ENCODE measurements at regions of chr3 and their contacts with region 1.

Region 1: DNA sequence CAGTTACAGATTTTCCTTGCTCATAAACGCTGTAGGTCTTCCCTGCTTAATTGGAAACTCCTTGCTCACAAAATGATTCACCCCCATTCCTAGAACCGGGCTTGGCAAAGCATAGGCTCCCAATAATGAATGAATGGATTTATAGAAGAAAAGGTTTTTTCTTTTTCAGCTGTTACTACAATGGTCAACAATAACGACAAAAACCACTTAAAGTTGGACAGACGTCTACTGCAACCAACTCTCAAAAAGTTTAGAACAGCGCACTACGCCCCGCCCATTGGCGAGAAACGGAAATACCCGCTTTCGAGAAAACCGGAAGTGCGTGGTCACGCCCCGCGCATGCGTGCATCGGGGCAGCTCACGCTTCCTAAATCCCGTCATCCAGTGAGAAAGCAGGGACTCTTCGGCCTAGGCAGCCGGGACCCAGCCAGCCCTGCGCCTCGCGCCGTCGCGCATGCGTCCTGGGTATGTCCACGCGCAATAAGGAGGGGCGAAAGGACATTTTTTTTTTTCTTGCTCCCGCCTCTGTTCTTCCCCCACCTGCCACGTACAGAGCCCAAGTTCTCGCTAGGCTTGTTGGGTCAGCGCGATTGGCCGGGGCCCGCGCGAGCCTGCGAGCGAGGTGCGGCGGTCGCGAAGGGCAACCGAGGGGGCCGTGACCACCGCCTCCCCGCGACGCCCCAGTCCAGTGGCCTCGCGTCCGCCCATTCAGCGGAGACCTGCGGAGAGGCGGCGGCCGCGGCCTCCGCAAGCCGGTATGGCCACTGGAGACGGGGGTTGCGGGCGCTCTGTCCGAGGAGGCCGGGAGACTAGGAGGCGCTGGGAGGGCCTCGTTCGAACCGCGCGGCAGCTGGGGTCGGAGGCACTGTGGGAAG is at the start of gene TFG:
- DNase-seq: peak; percentile 93 to 100 (median 97)
- ATAC-seq: peak; percentile 89
- H3K4me3 ChIP-seq: peak within 1 kb of the TSS; percentile 59 to 94
- H3K4me3 Mint-ChIP-seq: peak within 1 kb of the TSS; percentile 91
- H3K27ac ChIP-seq: peak within 1 kb of the TSS; percentile 87 to 90
- H3K27ac Mint-ChIP-seq: peak within 1 kb of the TSS; percentile 96
- H3K4me1 ChIP-seq: peaks cover 22% of the 10 kb centered on the region
- H3K4me1 Mint-ChIP-seq: peaks cover 47% of the 10 kb centered on the region
- H3K27me3 ChIP-seq: no peaks in the 10 kb centered on the region
- H3K27me3 Mint-ChIP-seq: no peaks in the 10 kb centered on the region
- CTCF ChIP-seq: no peak
- total RNA-seq, gene TFG: 76.3 to 88.3 TPM

Region 2: DNA sequence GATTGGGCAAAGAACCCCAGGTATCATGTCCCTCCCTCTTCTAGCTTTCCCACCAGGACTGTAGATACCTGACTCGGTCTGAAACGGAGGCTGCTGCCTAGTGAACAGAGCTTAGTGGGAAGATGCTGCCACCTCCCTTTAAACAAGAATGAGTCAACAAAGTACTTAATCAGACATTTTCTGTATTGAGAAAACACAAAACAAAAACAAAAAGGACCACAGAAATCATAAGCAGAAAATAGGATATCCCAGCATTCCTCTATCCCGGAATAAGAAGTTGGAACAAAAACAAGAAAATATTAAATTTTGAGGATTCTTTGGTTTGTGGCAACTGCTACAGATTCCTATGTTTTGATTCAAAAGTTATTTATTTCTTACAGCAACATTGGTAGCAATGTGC is 1122.5 kb before region 1 on chr3:
- CTCF ChIA-PET with region 1: no interaction called
- POLR2A ChIA-PET with region 1: no interaction called
- intact Hi-C with region 1: no loop called
- DNase-seq: no peak
- ATAC-seq: no peak
- H3K4me3 ChIP-seq: no peak overlapping the region
- H3K4me3 Mint-ChIP-seq: no peak overlapping the region
- H3K27ac ChIP-seq: no peak overlapping the region
- H3K27ac Mint-ChIP-seq: no peak overlapping the region
- H3K4me1 ChIP-seq: no peaks in the 10 kb centered on the region
- H3K4me1 Mint-ChIP-seq: no peaks in the 10 kb centered on the region
- H3K27me3 ChIP-seq: no peaks in the 10 kb centered on the region
- H3K27me3 Mint-ChIP-seq: no peaks in the 10 kb centered on the region
- CTCF ChIP-seq: no peak

Region 3: GRCh38 chr3:99817437-99818240 is 891.6 kb before region 1 on chr3 and contains the start of gene CMSS1:
- CTCF ChIA-PET with region 1: no interaction called
- POLR2A ChIA-PET with region 1: no interaction called
- intact Hi-C with region 1: loop called (anchors 1 to 5 kb)
- DNase-seq: peak; percentile 89 to 99 (median 96)
- ATAC-seq: peak; percentile 84
- H3K4me3 ChIP-seq: peak within 1 kb of the TSS; percentile 55 to 79
- H3K4me3 Mint-ChIP-seq: peak within 1 kb of the TSS; percentile 96
- H3K27ac ChIP-seq: peak within 1 kb of the TSS; percentile 90 to 95
- H3K27ac Mint-ChIP-seq: peak within 1 kb of the TSS; percentile 100
- H3K4me1 ChIP-seq: peaks cover 20% of the 10 kb centered on the region
- H3K4me1 Mint-ChIP-seq: peaks cover 41% of the 10 kb centered on the region
- H3K27me3 ChIP-seq: no peaks in the 10 kb centered on the region
- H3K27me3 Mint-ChIP-seq: no peaks in the 10 kb centered on the region
- CTCF ChIP-seq: no peak
- total RNA-seq, gene CMSS1: 9.0 to 13.7 TPM

Region 4: GRCh38 chr3:100316641-100317069 is 392.5 kb before region 1 on chr3:
- CTCF ChIA-PET with region 1: interaction called, 3 read pairs
- POLR2A ChIA-PET with region 1: no interaction called
- intact Hi-C with region 1: loop called in 1 of 2 experiments (anchors 5 kb)
- DNase-seq: peak in 6 of 9 experiments; percentile 13 to 76 (median 30)
- ATAC-seq: peak; percentile 84
- H3K4me3 ChIP-seq: no peak overlapping the region
- H3K4me3 Mint-ChIP-seq: peak overlapping the region; percentile 45
- H3K27ac ChIP-seq: no peak overlapping the region
- H3K27ac Mint-ChIP-seq: no peak overlapping the region
- H3K4me1 ChIP-seq: no peaks in the 10 kb centered on the region
- H3K4me1 Mint-ChIP-seq: peaks cover 6% of the 10 kb centered on the region
- H3K27me3 ChIP-seq: no peaks in the 10 kb centered on the region
- H3K27me3 Mint-ChIP-seq: no peaks in the 10 kb centered on the region
- CTCF ChIP-seq: peak; percentile 58

Region 5: GRCh38 chr3:100634493-100635272 is 74.5 kb before region 1 on chr3:
- CTCF ChIA-PET with region 1: no interaction called
- POLR2A ChIA-PET with region 1: no interaction called
- intact Hi-C with region 1: loop called (anchors 5 kb)
- DNase-seq: peak in 5 of 9 experiments; percentile 6 to 42 (median 15)
- ATAC-seq: peak; percentile 71
- H3K4me3 ChIP-seq: no peak overlapping the region
- H3K4me3 Mint-ChIP-seq: no peak overlapping the region
- H3K27ac ChIP-seq: no peak overlapping the region
- H3K27ac Mint-ChIP-seq: no peak overlapping the region
- H3K4me1 ChIP-seq: no peaks in the 10 kb centered on the region
- H3K4me1 Mint-ChIP-seq: peaks cover 8% of the 10 kb centered on the region
- H3K27me3 ChIP-seq: no peaks in the 10 kb centered on the region
- H3K27me3 Mint-ChIP-seq: no peaks in the 10 kb centered on the region
- CTCF ChIP-seq: no peak

Region 6: GRCh38 chr3:101573449-101574387 is 864.5 kb after region 1 on chr3 and contains the start of gene PCNP:
- CTCF ChIA-PET with region 1: no interaction called
- POLR2A ChIA-PET with region 1: no interaction called
- intact Hi-C with region 1: loop called in 1 of 2 experiments (anchors 1 kb)
- DNase-seq: peak; percentile 98 to 100 (median 99)
- ATAC-seq: peak; percentile 82
- H3K4me3 ChIP-seq: peak within 1 kb of the TSS; percentile 83 to 96
- H3K4me3 Mint-ChIP-seq: peak within 1 kb of the TSS; percentile 95
- H3K27ac ChIP-seq: peak within 1 kb of the TSS; percentile 98 to 99
- H3K27ac Mint-ChIP-seq: peak within 1 kb of the TSS; percentile 99
- H3K4me1 ChIP-seq: peaks cover 56% of the 10 kb centered on the region
- H3K4me1 Mint-ChIP-seq: peaks cover 73% of the 10 kb centered on the region
- H3K27me3 ChIP-seq: no peaks in the 10 kb centered on the region
- H3K27me3 Mint-ChIP-seq: no peaks in the 10 kb centered on the region
- CTCF ChIP-seq: peak; percentile 85
- total RNA-seq, gene PCNP: 175 to 189 TPM

Region 7: DNA sequence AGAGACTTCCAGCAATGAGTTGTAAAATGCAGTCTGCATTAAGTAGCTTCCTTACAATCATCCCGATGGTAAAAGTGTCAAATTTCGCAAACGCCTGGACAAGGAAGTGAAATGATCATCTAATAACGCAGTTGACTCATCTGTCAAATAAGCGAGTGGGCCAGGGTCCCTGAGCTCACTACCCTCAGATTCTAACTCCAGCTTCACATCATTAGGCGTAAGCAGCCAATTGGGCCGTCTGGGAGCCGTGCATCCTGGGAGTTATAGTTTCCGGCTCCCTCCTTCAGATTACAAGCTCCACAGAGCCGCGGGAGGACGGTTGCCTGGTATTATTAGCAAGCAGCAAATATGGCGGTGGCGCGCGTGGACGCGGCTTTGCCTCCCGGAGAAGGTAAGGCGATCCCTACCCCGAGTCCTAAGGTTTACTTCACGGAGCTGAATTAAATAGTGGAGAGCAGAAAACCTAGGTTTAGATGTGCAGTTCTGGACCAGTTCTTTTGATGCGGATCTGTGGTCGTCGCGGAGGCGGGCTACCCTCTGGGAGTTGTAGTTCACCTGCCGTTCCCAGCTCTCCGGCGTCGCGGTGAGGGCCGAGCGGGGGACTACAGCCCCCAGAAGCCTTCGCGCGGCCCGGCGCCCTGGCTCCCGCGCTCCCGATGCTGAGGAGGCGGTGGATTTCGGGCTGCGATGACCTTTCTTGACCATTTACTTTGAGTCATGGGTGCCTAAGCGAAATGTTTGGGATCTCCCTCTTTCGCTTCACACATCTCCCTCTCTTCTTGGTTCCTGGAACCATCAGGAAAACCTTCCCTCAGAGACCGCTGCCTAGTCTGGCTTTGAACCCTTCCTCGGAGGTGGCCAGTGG is 1015.4 kb after region 1 on chr3 and contains the start of gene CEP97:
- CTCF ChIA-PET with region 1: no interaction called
- POLR2A ChIA-PET with region 1: no interaction called
- intact Hi-C with region 1: loop called (anchors 1 to 5 kb)
- DNase-seq: peak; percentile 67 to 92 (median 87)
- ATAC-seq: peak; percentile 94
- H3K4me3 ChIP-seq: peak within 1 kb of the TSS; percentile 82 to 99
- H3K4me3 Mint-ChIP-seq: peak within 1 kb of the TSS; percentile 100
- H3K27ac ChIP-seq: peak within 1 kb of the TSS; percentile 62 to 83
- H3K27ac Mint-ChIP-seq: peak within 1 kb of the TSS; percentile 98
- H3K4me1 ChIP-seq: peaks cover 29% of the 10 kb centered on the region
- H3K4me1 Mint-ChIP-seq: peaks cover 37% of the 10 kb centered on the region
- H3K27me3 ChIP-seq: no peaks in the 10 kb centered on the region
- H3K27me3 Mint-ChIP-seq: no peaks in the 10 kb centered on the region
- CTCF ChIP-seq: no peak
- total RNA-seq, gene CEP97: 3.4 to 5.3 TPM